MCF 10A (cell line): ENCODE measurements at regions of chr1 and their contacts with region 1.

Region 1: DNA sequence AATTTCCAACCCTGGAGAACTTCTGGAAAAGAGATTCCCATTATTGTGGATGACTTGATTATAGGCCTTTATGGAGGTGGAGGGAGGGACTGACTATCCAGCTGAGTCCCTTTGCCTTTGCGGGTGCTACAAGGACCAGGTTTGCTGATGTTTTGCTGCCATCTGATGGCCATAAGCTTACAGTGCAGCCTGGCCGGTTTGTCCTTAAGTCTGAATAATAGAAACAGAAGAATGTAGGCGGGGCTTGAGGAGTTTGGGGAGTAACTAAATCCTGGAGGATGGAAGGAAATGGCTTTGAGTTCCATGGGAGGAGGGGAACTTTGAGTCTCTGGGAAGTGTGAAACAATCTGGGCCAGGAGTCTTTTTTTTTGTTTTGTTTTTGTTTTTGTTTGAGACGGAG is 55.7 kb upstream of the CD1D start:
- DNase-seq: peak; percentile 98
- H3K4me3 Mint-ChIP-seq: no peak overlapping the region
- H3K27ac Mint-ChIP-seq: no peak overlapping the region
- H3K4me1 Mint-ChIP-seq: peaks cover 14% of the 10 kb centered on the region
- H3K27me3 Mint-ChIP-seq: no peaks in the 10 kb centered on the region
- CTCF ChIP-seq: peak; percentile 98

Region 2: GRCh38 chr1:157369808-157370521 is 755.0 kb before region 1 on chr1:
- CTCF ChIA-PET with region 1: no interaction called
- POLR2A ChIA-PET with region 1: no interaction called
- intact Hi-C with region 1: loop called (anchors 5 kb)
- DNase-seq: peak; percentile 80
- H3K4me3 Mint-ChIP-seq: no peak overlapping the region
- H3K27ac Mint-ChIP-seq: no peak overlapping the region
- H3K4me1 Mint-ChIP-seq: peaks cover 4% of the 10 kb centered on the region
- H3K27me3 Mint-ChIP-seq: peaks cover 16% of the 10 kb centered on the region
- CTCF ChIP-seq: peak; percentile 99

Region 3: GRCh38 chr1:157715736-157716135 is 409.3 kb before region 1 on chr1:
- CTCF ChIA-PET with region 1: interaction called, 12 read pairs
- POLR2A ChIA-PET with region 1: no interaction called
- intact Hi-C with region 1: no loop called
- DNase-seq: no peak
- H3K4me3 Mint-ChIP-seq: no peak overlapping the region
- H3K27ac Mint-ChIP-seq: no peak overlapping the region
- H3K4me1 Mint-ChIP-seq: no peaks in the 10 kb centered on the region
- H3K27me3 Mint-ChIP-seq: peaks cover 60% of the 10 kb centered on the region
- CTCF ChIP-seq: no peak

Region 4: DNA sequence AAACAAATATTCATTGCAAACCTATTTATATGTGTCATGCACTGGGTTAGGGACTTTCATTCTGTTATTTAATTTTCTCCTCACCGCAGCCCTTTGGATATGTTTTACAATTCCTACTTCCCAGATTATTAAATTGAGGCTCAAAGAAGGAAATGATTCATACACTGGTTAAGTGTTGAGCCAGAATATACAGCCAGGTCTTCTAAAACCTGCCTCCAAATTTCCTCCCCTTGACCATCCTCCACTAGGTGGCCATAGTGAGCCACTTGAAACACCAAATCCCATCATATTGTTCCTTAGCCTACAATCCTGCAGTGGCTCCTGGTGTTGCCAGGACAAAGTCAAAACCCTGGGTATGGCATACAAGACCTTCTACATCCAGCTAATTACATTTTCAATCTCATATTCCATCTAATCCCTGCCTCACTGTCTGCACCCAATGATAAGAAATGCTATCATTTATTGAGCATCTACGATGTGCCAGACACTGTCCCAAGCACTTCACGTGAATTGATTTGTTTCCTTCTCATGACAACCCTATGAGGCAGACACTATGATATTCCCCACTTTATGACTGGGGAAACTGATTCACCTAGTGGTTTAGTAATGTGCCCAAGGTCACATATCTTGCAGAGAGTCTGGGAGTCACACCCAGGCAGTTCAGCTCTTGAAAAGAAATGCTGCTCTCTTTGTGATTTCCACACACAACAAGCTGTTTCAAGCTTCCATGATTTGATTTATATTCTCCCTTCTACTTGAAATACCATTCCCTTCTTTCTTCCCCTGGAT is 155.1 kb before region 1 on chr1:
- CTCF ChIA-PET with region 1: interaction called, 2,587 read pairs
- POLR2A ChIA-PET with region 1: interaction called, 13 read pairs
- intact Hi-C with region 1: loop called (anchors 1 kb)
- DNase-seq: peak; percentile 95
- H3K4me3 Mint-ChIP-seq: peak overlapping the region; percentile 55
- H3K27ac Mint-ChIP-seq: peak overlapping the region; percentile 49
- H3K4me1 Mint-ChIP-seq: peaks cover 28% of the 10 kb centered on the region
- H3K27me3 Mint-ChIP-seq: no peaks in the 10 kb centered on the region
- CTCF ChIP-seq: peak; percentile 94

Region 5: GRCh38 chr1:158028969-158029368 is 96.0 kb before region 1 on chr1:
- CTCF ChIA-PET with region 1: interaction called, 210 read pairs
- POLR2A ChIA-PET with region 1: no interaction called
- intact Hi-C with region 1: no loop called
- DNase-seq: peak; percentile 72
- H3K4me3 Mint-ChIP-seq: no peak overlapping the region
- H3K27ac Mint-ChIP-seq: peak overlapping the region; percentile 63
- H3K4me1 Mint-ChIP-seq: peaks cover 42% of the 10 kb centered on the region
- H3K27me3 Mint-ChIP-seq: no peaks in the 10 kb centered on the region
- CTCF ChIP-seq: no peak

Region 6: DNA sequence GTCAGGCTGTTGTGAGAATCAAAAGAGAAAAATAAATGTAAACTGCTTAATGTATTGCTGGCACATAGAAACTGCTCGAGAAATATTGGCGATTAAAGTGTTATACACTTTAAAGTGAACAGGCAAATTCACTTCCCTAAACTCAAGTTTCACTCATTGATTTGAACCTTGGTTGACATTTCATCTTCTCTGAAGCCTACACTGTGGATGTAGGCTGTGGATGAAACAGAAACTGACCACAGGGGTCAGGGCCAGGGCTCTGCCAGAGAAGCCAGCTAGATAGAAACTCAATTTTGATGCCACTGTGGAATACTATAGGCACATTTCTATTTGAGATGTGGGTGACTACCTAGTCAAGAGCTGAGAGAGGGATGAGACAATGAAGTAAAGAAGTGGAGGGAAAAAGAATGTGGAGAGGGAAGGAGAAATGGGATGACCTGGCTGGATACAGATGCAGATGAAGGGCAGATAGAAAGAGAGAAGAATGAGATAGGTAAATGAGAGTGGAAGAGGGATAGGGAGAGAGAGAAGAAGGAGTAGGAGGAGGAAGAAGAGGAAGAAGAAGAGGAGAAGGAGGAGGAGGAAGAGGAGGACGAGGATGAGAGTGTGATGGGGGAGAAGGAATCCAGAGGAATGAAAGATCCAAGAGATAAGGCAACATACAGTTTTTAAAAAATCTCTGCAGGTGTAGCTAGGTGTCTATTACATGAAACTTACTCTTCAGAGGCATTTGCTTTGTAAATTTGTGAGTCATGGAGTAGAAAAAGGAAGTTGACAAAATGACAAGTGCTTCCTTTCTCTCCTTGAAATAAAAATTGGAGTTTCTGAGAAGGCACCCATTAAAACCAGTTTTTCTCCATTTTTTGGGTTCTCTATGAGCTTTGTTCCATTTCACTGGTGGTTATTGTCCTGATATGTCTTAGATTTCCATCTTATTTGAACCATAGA is 38.3 kb after region 1 on chr1:
- CTCF ChIA-PET with region 1: interaction called, 14 read pairs
- POLR2A ChIA-PET with region 1: no interaction called
- intact Hi-C with region 1: no loop called
- DNase-seq: no peak
- H3K4me3 Mint-ChIP-seq: no peak overlapping the region
- H3K27ac Mint-ChIP-seq: no peak overlapping the region
- H3K4me1 Mint-ChIP-seq: no peaks in the 10 kb centered on the region
- H3K27me3 Mint-ChIP-seq: peaks cover 69% of the 10 kb centered on the region
- CTCF ChIP-seq: no peak